CD4-positive, alpha-beta memory T cell (primary cell): ENCODE measurements at regions of chr5 and their contacts with region 1.

Region 1: GRCh38 chr5:177497292-177498033 is at the start of gene PDLIM7:
- DNase-seq: peak; percentile 91 to 94 (median 92)
- H3K4me3 ChIP-seq: peak within 1 kb of the TSS; percentile 65 to 75
- H3K4me3 Mint-ChIP-seq: peak within 1 kb of the TSS; percentile 84 to 93 (median 88)
- H3K27ac ChIP-seq: peak within 1 kb of the TSS; percentile 49
- H3K27ac Mint-ChIP-seq: peak within 1 kb of the TSS; percentile 57 to 92 (median 85)
- H3K4me1 ChIP-seq: peaks cover 11% of the 10 kb centered on the region
- H3K4me1 Mint-ChIP-seq: peaks cover 8 to 26% (median 20%) of the 10 kb centered on the region in 4 donors
- H3K27me3 ChIP-seq: no peaks in the 10 kb centered on the region
- H3K27me3 Mint-ChIP-seq: no peaks in the 10 kb centered on the region
- total RNA-seq, gene PDLIM7: 5.8 to 7.3 TPM

Region 2: GRCh38 chr5:177256296-177256695 is 241.2 kb before region 1 on chr5:
- CTCF ChIA-PET with region 1: no interaction called
- POLR2A ChIA-PET with region 1: no interaction called
- intact Hi-C with region 1: no loop called
- DNase-seq: no peak
- H3K4me3 ChIP-seq: no peak overlapping the region
- H3K4me3 Mint-ChIP-seq: no peak overlapping the region
- H3K27ac ChIP-seq: no peak overlapping the region
- H3K27ac Mint-ChIP-seq: peak overlapping the region in 1 of 7 donors; percentile 15
- H3K4me1 ChIP-seq: no peaks in the 10 kb centered on the region
- H3K4me1 Mint-ChIP-seq: peaks cover 4 to 10% (median 7%) of the 10 kb centered on the region in 4 donors
- H3K27me3 ChIP-seq: no peaks in the 10 kb centered on the region
- H3K27me3 Mint-ChIP-seq: no peaks in the 10 kb centered on the region

Region 3: DNA sequence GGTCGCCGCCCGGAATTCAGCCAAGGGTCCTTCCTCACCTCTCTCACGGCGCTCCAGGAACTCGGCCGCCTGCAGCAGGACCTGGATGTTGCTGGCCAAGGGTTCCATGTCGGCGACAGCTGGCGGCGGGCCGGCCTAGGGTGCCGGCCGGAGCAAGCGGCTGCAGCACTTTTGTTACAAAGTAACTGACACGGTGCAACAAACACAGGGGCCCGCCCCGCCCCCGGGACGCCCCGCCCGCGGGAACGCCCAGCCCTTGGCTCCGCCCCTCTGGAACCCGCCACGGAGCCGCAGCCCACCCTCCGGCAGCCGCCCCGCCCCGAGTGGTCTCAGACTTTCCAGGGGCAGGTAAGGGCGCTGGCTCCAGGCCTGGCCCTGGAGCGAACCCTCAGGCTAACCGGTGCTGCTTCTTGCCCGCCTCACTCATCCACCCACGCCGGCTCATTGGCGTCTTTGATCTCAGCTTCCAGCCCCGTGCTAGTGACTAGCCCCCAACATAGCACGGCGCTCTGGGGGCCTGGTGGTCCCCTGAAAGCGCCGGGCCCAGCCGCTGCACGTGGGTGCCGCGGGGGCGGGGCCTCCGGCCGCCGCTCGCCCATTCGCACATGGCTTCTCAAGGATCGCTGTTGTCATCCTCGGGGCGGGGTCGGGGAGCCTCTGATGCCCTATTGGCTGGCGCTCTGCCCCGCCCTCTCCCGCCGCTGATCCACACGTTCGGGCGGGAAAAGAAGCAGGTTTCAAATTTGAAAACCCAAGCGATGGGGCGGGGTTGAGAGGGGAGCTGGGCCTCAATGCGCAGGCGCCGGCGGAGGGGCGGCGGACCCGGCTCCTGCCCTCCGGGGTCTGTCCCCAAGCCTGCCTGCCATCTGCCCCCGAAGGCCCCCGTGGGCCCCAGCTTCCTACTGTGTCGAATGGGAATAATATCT is 185.5 kb before region 1 on chr5 and contains the start of gene MXD3:
- CTCF ChIA-PET with region 1: interaction called, 48 read pairs
- POLR2A ChIA-PET with region 1: interaction called, 3 read pairs
- intact Hi-C with region 1: loop called (anchors 1 kb)
- DNase-seq: peak; percentile 90 to 96 (median 93)
- H3K4me3 ChIP-seq: peak within 1 kb of the TSS; percentile 24 to 64
- H3K4me3 Mint-ChIP-seq: peak within 1 kb of the TSS; percentile 70 to 86 (median 80)
- H3K27ac ChIP-seq: peak within 1 kb of the TSS; percentile 49
- H3K27ac Mint-ChIP-seq: peak within 1 kb of the TSS; percentile 29 to 83 (median 75)
- H3K4me1 ChIP-seq: peaks cover 41% of the 10 kb centered on the region
- H3K4me1 Mint-ChIP-seq: peaks cover 17 to 49% (median 30%) of the 10 kb centered on the region in 4 donors
- H3K27me3 ChIP-seq: no peaks in the 10 kb centered on the region
- H3K27me3 Mint-ChIP-seq: no peaks in the 10 kb centered on the region
- total RNA-seq, gene MXD3: 17.3 TPM

Region 4: DNA sequence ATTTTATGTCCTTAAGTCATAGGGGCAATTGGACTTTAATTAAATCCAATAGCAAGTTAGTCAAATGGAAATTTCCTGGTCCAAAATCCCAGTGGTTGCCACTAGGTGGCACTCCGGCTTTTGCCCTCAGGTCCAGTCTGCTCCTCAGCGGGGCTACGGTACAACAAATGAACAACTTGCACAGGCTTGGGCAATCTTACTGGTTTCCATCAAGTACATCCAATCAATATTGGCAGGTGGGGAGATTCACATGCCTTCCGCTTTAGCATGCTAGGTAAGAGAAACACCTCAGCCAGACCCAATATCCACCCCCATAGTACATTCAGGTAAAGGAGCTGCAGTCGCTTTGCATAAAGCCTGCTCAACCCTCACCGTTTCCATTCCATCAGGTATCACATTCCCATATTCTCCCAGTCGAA is 179.5 kb before region 1 on chr5:
- CTCF ChIA-PET with region 1: interaction called, 22 read pairs
- POLR2A ChIA-PET with region 1: no interaction called
- intact Hi-C with region 1: loop called (anchors 1 kb)
- DNase-seq: peak; percentile 68 to 73 (median 69)
- H3K4me3 ChIP-seq: no peak overlapping the region
- H3K4me3 Mint-ChIP-seq: no peak overlapping the region
- H3K27ac ChIP-seq: no peak overlapping the region
- H3K27ac Mint-ChIP-seq: peak overlapping the region in 2 of 7 donors; percentile 10 to 34
- H3K4me1 ChIP-seq: peaks cover 15% of the 10 kb centered on the region
- H3K4me1 Mint-ChIP-seq: peaks cover 8 to 36% (median 20%) of the 10 kb centered on the region in 4 donors
- H3K27me3 ChIP-seq: no peaks in the 10 kb centered on the region
- H3K27me3 Mint-ChIP-seq: no peaks in the 10 kb centered on the region

Region 5: DNA sequence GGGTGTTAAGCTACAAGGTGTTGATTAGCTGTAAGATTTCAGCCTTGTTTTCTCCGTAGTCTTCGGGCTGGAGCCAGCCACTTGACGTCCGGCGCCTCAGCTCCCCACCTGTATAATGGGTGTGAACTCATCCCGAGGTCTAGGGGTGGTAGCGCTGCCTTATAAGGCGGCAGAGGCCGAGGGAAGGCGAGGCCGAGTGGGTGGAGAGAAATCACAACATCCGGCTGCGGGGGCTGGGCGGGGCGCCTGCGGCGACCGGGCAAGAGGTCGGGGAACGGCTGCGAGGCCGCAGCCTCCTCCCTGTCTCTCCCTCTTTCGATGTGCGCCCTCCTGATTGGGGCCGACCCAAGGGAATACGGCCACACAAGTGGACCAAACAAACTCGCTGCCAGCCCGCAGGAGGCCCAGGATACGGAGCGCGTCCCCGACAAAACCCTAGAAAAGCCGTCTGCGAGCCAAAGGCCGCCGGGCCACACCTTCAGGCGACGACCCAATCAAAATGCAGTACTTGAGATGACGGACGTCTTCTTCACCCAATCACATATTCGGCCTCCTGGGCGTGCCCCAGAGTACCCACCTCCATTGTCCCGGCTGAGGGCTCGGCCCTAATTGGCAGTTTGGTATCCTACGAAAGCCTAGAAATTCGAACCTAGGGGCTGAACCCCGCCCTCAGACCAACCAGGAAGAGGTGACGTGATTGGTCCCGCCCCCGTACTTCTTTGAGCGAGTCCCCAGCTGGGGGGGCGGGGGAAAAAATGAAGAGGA is 71.5 kb before region 1 on chr5:
- CTCF ChIA-PET with region 1: interaction called, 3 read pairs
- POLR2A ChIA-PET with region 1: interaction called, 4 read pairs
- intact Hi-C with region 1: loop called (anchors 1 kb)
- DNase-seq: peak; percentile 99 to 100 (median 100)
- H3K4me3 ChIP-seq: peak overlapping the region; percentile 21 to 53
- H3K4me3 Mint-ChIP-seq: peak overlapping the region; percentile 89 to 96 (median 92)
- H3K27ac ChIP-seq: peak overlapping the region; percentile 65
- H3K27ac Mint-ChIP-seq: peak overlapping the region; percentile 91 to 99 (median 99)
- H3K4me1 ChIP-seq: peaks cover 52% of the 10 kb centered on the region
- H3K4me1 Mint-ChIP-seq: peaks cover 31 to 65% (median 44%) of the 10 kb centered on the region in 4 donors
- H3K27me3 ChIP-seq: no peaks in the 10 kb centered on the region
- H3K27me3 Mint-ChIP-seq: no peaks in the 10 kb centered on the region

Region 6: GRCh38 chr5:177473461-177474001 is 23.9 kb before region 1 on chr5 and contains the start of gene DBN1:
- CTCF ChIA-PET with region 1: interaction called, 9 read pairs
- POLR2A ChIA-PET with region 1: interaction called, 3 read pairs
- intact Hi-C with region 1: loop called (anchors 2 kb)
- DNase-seq: no peak
- H3K4me3 ChIP-seq: peak within 1 kb of the TSS in 1 of 2 donors; percentile 17
- H3K4me3 Mint-ChIP-seq: peak within 1 kb of the TSS; percentile 67 to 84 (median 78)
- H3K27ac ChIP-seq: no peak within 1 kb of the TSS
- H3K27ac Mint-ChIP-seq: peak within 1 kb of the TSS in 3 of 7 donors; percentile 17 to 65 (median 60)
- H3K4me1 ChIP-seq: peaks cover 5% of the 10 kb centered on the region
- H3K4me1 Mint-ChIP-seq: peaks cover 0 to 25% (median 10%) of the 10 kb centered on the region in 4 donors
- H3K27me3 ChIP-seq: peaks cover 3% of the 10 kb centered on the region
- H3K27me3 Mint-ChIP-seq: peaks cover 0 to 5% of the 10 kb centered on the region in 2 donors
- total RNA-seq, gene DBN1: 0.99 to 1.2 TPM

Region 7: DNA sequence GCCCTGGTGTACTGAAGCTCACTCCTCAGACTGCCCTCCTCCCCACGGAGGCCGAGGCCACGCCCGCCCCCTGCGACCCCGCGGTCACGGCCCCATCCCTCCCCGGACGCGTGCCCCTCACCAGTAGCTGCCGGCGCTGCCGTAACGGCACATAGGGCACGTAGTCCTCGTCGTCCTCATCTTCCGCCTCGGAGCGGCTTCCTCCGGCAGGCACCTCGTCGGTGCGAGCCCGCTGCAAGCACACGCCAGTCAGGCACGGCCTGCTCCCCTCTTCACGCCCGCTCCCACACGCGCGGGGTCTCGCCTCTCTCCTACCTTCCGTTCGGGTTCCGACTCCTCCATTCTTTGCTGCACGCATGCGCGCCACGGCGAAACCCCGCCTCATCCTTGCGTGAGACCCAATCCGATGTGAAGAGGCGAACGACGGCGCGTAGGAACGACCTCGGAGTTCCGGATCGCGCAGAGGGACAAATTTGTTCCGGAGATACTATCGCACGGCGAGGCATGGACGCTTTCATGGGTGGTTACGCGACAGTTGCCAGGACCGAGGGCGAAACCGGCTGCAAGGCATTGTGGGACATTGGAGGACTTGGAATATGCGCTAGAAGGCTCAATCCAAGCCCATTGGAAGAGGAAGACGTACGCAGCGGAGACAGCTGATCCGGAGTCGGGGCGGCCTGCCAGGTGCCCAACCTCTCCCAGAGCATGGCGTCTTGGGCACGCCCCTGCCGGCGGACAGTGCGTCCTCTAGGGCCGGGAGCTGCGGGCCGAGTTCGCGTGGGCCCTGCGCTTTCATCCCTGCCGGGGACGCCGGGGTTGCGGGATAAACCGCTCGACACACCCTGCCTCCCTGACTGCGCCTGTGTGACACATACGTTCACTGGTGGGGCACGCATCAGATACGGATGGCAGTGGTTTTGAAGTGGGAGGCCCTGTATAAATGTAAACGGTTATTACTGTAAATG is 19.4 kb after region 1 on chr5 and contains the start of gene DDX41:
- CTCF ChIA-PET with region 1: interaction called, 13 read pairs
- POLR2A ChIA-PET with region 1: interaction called, 8 read pairs
- intact Hi-C with region 1: loop called (anchors 1 kb)
- DNase-seq: peak; percentile 95 to 97 (median 95)
- H3K4me3 ChIP-seq: peak within 1 kb of the TSS; percentile 88 to 93
- H3K4me3 Mint-ChIP-seq: peak within 1 kb of the TSS; percentile 93 to 100 (median 96)
- H3K27ac ChIP-seq: peak within 1 kb of the TSS; percentile 71
- H3K27ac Mint-ChIP-seq: peak within 1 kb of the TSS; percentile 82 to 99 (median 95)
- H3K4me1 ChIP-seq: peaks cover 37% of the 10 kb centered on the region
- H3K4me1 Mint-ChIP-seq: peaks cover 31 to 62% (median 43%) of the 10 kb centered on the region in 4 donors
- H3K27me3 ChIP-seq: no peaks in the 10 kb centered on the region
- H3K27me3 Mint-ChIP-seq: no peaks in the 10 kb centered on the region
- total RNA-seq, gene DDX41: 72.9 to 80.3 TPM